Breast epithelium (tissue), 4 donors: ENCODE measurements at regions of chr15 and their contacts with region 1.

Region 1: GRCh38 chr15:69253156-69253555 is 45.6 kb upstream of the PAQR5 start:
- DNase-seq: no peak
- H3K4me3 ChIP-seq: no peak overlapping the region
- H3K27ac ChIP-seq: peak overlapping the region; percentile 37 to 60
- H3K4me1 ChIP-seq: no peaks in the 10 kb centered on the region
- H3K27me3 ChIP-seq: no peaks in the 10 kb centered on the region
- CTCF ChIP-seq: no peak
- POLR2A ChIP-seq: no peak

Region 2: DNA sequence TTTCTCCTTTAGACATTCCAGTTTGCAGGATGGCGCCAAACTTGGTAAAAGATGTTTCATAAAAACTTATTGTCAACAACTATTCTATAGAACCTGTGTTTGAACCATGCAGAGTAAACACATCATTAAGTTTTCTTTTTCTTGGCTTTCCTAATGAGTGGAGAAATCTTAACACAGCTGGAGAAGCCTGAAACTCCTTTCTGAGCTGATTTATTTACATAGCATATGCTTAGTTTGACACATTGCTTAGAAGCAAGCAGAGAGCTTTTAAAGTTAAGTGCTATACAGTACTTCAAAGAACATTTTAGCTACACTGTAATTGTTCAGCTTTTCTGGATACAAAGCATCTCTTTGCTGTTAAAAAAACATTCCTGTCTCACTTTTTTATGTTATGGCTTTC is 15.4 kb before region 1 on chr15:
- intact Hi-C with region 1: loop called (anchors 2 kb)
- DNase-seq: no peak
- H3K4me3 ChIP-seq: no peak overlapping the region
- H3K27ac ChIP-seq: no peak overlapping the region
- H3K4me1 ChIP-seq: no peaks in the 10 kb centered on the region
- H3K27me3 ChIP-seq: no peaks in the 10 kb centered on the region
- CTCF ChIP-seq: no peak
- POLR2A ChIP-seq: no peak